Gastrocnemius medialis (tissue), 4 donors: ENCODE measurements at regions of chr6 and their contacts with region 1.

Region 1: DNA sequence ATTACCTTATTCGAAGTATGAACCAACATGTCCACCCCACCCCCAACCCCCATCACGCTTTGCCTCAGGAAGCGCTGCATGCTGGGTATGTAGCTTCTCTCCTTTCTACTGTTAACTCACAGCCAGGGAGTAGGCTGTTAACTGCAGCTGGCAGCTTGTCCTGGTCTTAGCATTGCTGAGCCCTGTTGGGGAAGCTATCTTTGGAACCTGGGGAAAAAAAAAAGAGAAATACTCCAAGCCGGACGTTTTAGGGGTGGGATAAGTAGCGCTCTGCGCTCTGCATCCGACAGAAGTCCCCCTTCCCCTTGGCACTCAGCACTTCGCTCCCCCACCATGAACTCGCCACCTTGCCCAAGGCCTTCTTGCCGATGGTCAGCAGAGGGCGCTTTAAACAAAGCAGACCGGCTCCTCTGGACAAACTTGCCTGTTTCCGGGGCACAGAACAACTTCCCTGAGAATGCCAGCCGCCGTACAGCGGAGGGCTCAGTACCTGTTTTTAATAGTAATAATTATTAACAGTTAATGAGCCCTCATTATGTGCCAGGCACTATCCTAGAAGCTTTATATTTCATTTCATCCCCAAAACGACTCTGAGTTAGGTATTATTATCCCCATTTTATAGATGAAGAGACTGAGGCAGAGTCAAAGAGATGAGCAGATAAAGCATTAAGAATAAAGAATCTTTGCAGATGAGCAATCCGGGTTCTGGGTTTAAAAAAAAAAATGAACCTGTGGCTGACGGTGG is 35.2 kb upstream of the MDFI start:
- DNase-seq: peak; percentile 57 to 69
- ATAC-seq: peak; percentile 90 to 91
- H3K4me3 ChIP-seq: peak overlapping the region in 1 of 4 donors; percentile 8
- H3K27ac ChIP-seq: no peak overlapping the region
- H3K4me1 ChIP-seq: peaks cover 0 to 8% of the 10 kb centered on the region in 2 donors
- H3K27me3 ChIP-seq: no peaks in the 10 kb centered on the region
- CTCF ChIP-seq: peak; percentile 83 to 94 (median 85)
- POLR2A ChIP-seq: no peak

Region 2: GRCh38 chr6:41560431-41561192 is 42.4 kb before region 1 on chr6:
- in situ Hi-C with region 1: no loop called
- intact Hi-C with region 1: no loop called
- DNase-seq: no peak
- ATAC-seq: no peak
- H3K4me3 ChIP-seq: peak overlapping the region; percentile 38 to 55 (median 42)
- H3K27ac ChIP-seq: peak overlapping the region in 1 of 4 donors; percentile 33
- H3K4me1 ChIP-seq: peaks cover 15 to 33% of the 10 kb centered on the region in 2 donors
- H3K27me3 ChIP-seq: no peaks in the 10 kb centered on the region
- CTCF ChIP-seq: no peak
- POLR2A ChIP-seq: no peak

Region 3: DNA sequence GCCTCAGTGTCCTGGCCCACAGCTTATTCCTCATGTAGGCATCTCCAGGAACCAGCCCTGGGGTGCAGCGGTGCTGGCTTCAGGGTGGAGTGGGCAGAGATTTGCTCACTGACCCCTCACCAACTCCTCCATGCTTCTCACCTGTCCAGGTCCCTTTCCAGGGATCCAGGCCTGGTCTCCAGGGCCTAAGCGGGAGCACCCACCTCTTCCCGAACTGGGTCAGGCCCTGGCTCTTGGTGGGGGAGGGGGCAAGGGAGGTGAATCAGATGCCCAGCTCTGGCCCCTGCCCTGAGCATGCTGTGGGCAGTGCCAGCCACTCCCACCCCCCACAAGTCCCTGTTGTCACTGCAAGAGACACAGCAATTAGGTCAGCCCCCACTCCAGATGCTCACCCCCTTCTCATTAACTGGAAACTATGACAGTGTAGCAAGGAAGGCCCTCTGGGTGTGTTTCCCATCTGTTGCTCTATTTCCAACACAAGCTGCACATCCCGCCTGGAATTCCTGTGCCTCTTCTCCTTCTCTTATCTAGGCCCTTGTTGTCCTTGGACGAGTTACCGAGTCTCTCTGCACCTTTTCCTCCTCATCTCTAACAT is 72.2 kb after region 1 on chr6:
- in situ Hi-C with region 1: loop called (anchors 5 to 10 kb)
- intact Hi-C with region 1: no loop called
- DNase-seq: no peak
- ATAC-seq: no peak
- H3K4me3 ChIP-seq: no peak overlapping the region
- H3K27ac ChIP-seq: no peak overlapping the region
- H3K4me1 ChIP-seq: no peaks in the 10 kb centered on the region
- H3K27me3 ChIP-seq: no peaks in the 10 kb centered on the region
- CTCF ChIP-seq: no peak
- POLR2A ChIP-seq: no peak

Region 4: DNA sequence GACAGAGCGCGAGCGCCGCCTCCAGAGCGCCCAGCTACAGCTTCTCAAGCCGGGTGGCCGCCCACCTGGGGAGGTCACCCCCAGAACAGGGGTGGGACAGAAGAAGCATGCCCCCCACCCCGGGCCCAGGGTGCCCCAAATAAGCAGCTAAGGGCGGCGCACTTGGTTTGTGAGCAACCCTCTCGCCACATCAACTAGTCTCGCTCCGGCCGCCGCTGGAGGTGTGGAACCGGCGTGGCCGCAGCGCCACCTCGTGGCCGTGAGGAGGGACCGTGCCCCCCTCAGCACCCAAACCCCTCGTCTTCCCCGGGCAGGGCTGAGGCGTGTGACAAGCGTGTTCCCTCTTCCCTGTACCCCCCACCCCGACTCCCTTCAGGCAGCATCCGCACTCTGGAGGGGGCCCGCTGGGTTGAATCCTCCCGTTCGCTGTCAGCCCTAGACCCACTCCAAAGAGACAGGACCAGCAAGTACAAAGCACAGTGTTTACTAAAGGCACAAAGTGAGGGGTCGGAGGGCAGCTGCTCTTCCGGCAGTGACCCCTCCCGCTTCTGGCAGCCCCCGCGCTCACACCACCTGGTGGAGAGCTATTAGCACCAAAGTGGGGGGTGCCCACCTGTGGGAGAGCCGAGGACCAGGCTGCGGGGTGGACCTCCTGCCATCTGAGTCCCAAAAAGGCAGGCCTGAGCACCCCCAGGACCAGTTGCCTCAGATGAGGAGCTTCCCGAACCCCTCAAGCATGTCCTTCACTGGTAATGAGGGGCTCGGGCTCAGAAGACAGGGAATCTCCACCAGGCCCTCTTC is 80.7 kb after region 1 on chr6:
- in situ Hi-C with region 1: loop called (anchors 5 to 10 kb)
- intact Hi-C with region 1: loop called (anchors 1 kb)
- DNase-seq: peak; percentile 51 to 69
- ATAC-seq: peak; percentile 57 to 67
- H3K4me3 ChIP-seq: peak overlapping the region; percentile 40 to 61 (median 50)
- H3K27ac ChIP-seq: peak overlapping the region; percentile 52 to 67 (median 58)
- H3K4me1 ChIP-seq: peaks cover 13 to 14% of the 10 kb centered on the region in 2 donors
- H3K27me3 ChIP-seq: no peaks in the 10 kb centered on the region
- CTCF ChIP-seq: peak; percentile 78 to 95 (median 90)
- POLR2A ChIP-seq: no peak

Region 5: GRCh38 chr6:41767156-41767833 is 164.3 kb after region 1 on chr6:
- in situ Hi-C with region 1: loop called in 3 of 4 experiments (anchors 10 to 25 kb)
- intact Hi-C with region 1: no loop called
- DNase-seq: no peak
- ATAC-seq: no peak
- H3K4me3 ChIP-seq: no peak overlapping the region
- H3K27ac ChIP-seq: no peak overlapping the region
- H3K4me1 ChIP-seq: no peaks in the 10 kb centered on the region
- H3K27me3 ChIP-seq: no peaks in the 10 kb centered on the region
- CTCF ChIP-seq: no peak
- POLR2A ChIP-seq: no peak